ENCODE measurements at regions of chr12 and their contacts with region 1.

Region 1: DNA sequence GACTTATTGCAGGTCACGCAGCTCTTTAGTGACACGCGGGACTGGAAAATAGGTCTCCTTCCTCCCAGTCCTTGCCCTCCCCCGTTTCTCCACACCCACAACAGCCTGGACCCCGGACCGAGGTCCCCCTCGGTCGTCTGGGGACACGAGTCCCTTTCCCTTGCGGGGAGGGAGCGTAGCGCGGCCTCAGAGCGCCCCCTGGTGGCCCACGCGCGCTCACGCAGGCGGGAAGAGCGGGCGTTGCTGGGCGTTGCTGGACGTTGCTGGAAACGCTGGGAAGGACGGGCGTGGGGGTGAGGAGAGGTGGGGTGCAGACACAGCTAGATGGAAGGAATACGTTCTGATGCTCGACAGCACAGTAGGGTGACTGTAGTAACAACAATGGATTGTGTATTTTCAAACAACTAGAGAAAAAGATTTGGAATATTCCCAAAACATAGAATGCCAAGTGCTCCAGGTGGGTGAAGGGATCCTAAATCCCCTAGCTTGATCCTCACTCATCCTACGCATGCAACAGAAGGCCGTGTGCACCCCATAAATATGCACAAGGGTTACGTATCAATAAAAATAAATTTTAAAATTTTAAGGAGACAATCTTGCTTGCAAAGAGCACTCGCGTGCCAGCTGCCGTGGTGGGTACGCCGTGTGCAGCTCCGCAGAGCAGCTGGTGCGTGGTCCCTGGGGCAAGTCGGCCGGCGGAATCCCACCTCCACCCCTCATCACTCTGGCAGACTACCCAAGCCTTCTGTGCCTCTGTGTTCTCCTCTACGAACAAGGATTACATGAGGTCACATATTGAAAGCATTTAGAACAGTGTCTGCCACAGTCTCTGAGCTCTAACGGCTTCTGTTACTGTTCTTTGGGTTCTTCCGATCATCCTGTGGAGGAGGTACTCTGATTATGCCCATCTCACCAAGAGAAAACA is 87.4 kb downstream of the B4GALNT3 start:
- DNase-seq: peak in 39 of 42 donors; percentile 36 to 88 (median 69)

Region 2: GRCh38 chr12:452667-453210 is 94.4 kb before region 1 on chr12:
- intact Hi-C with region 1: loop called (anchors 2 kb)
- DNase-seq: peak in 17 of 42 donors; percentile 23 to 69 (median 48)